Natural killer cell (primary cell): ENCODE measurements at regions of chr3 and their contacts with region 1.

Region 1: DNA sequence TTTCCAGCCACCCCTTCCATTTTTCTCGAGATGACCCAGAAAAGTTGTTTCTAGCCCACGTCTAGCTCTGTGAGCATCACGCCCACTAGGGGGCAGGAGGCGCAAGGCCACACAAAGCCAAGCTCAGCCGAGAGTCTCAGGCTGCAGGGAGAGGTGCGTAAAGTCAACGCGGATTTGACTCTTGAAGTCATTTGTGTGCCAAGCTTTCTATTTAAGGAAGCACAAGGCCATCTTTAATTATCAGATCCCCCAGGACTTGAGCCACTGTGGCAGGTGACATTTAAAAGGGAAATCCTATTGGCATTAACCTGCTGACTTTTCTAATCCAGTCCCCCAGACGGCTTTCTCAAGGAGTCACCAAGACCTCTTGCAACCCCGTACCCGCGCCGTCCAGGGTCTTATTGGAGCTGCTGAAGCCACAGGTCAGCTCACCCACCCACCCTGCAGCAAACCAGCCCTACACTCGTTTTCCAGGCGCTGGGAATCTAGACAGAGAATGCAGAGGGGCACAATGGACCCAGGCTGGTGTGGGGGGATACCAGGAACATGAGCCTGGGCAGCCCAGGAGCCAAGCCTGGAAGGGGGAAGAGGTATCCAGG is 62.1 kb downstream of the CAPN7 start:
- DNase-seq: peak; percentile 78 to 94
- ATAC-seq: peak; percentile 55 to 78 (median 59)
- H3K4me3 ChIP-seq: no peak overlapping the region
- H3K4me3 Mint-ChIP-seq: peak overlapping the region; percentile 21
- H3K27ac ChIP-seq: no peak overlapping the region
- H3K27ac Mint-ChIP-seq: peak overlapping the region; percentile 92 to 98
- H3K4me1 ChIP-seq: peaks cover 82% of the 10 kb centered on the region
- H3K4me1 Mint-ChIP-seq: peaks cover 86 to 88% of the 10 kb centered on the region in 2 donors
- H3K27me3 ChIP-seq: no peaks in the 10 kb centered on the region
- H3K27me3 Mint-ChIP-seq: no peaks in the 10 kb centered on the region
- CTCF ChIP-seq: peak; percentile 96

Region 2: DNA sequence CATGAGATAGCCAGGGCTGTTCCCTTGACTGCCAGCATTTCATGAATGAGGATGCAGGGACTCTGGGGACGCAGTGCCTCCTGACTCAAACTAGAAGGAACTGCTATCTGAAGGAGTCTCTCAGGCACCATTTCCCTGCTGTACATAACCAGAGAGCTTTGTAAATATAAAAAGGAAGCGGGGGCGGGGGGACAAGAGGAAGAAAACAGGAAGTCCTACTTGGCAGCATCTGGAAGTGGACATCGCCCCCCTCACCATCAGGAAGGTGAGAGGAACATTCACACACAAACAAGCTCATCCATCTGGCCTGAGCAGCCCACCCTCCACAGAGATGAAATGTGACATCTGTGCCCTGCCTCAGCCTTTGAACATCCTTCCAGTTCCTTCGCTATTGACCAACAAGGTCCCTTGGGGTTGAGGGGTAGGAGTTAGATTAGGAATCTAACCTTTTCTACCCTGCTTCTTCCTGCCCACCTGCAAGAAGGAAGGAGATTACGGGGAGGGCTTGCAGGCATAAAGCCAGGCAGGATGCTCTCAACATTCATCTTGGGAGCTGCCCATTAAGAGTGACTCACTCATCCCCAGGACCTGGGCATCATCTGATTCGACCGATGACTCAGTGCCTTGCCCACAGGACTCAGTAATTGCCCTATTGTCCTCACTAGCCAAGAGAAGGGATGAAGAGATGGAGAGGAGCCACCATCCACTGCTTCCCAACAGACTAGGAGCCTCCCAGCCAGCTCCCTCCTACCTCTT is 32.4 kb after region 1 on chr3:
- intact Hi-C with region 1: loop called (anchors 5 kb)
- DNase-seq: no peak
- ATAC-seq: peak in 1 of 3 donors; percentile 34
- H3K4me3 ChIP-seq: no peak overlapping the region
- H3K4me3 Mint-ChIP-seq: peak overlapping the region; percentile 98
- H3K27ac ChIP-seq: peak overlapping the region; percentile 22
- H3K27ac Mint-ChIP-seq: peak overlapping the region; percentile 87
- H3K4me1 ChIP-seq: peaks cover 86% of the 10 kb centered on the region
- H3K4me1 Mint-ChIP-seq: peaks cover 85 to 95% of the 10 kb centered on the region in 2 donors
- H3K27me3 ChIP-seq: no peaks in the 10 kb centered on the region
- H3K27me3 Mint-ChIP-seq: no peaks in the 10 kb centered on the region
- CTCF ChIP-seq: no peak

Region 3: GRCh38 chr3:15332405-15333098 is 64.4 kb after region 1 on chr3 and contains the start of gene SH3BP5:
- intact Hi-C with region 1: loop called (anchors 1 kb)
- DNase-seq: peak; percentile 75 to 87
- ATAC-seq: peak; percentile 90 to 96 (median 94)
- H3K4me3 ChIP-seq: peak within 1 kb of the TSS; percentile 97
- H3K4me3 Mint-ChIP-seq: peak within 1 kb of the TSS; percentile 97
- H3K27ac ChIP-seq: peak within 1 kb of the TSS; percentile 58
- H3K27ac Mint-ChIP-seq: peak within 1 kb of the TSS; percentile 88 to 95
- H3K4me1 ChIP-seq: peaks cover 27% of the 10 kb centered on the region
- H3K4me1 Mint-ChIP-seq: peaks cover 42 to 55% of the 10 kb centered on the region in 2 donors
- H3K27me3 ChIP-seq: no peaks in the 10 kb centered on the region
- H3K27me3 Mint-ChIP-seq: no peaks in the 10 kb centered on the region
- CTCF ChIP-seq: peak; percentile 61
- total RNA-seq, gene SH3BP5: 89.4 to 129 (median 91.0) TPM

Region 4: GRCh38 chr3:15377961-15378791 is 110.0 kb after region 1 on chr3:
- intact Hi-C with region 1: loop called (anchors 1 kb)
- DNase-seq: peak; percentile 93 to 98
- ATAC-seq: peak; percentile 96 to 98 (median 98)
- H3K4me3 ChIP-seq: no peak overlapping the region
- H3K4me3 Mint-ChIP-seq: peak overlapping the region; percentile 42
- H3K27ac ChIP-seq: peak overlapping the region; percentile 98
- H3K27ac Mint-ChIP-seq: peak overlapping the region; percentile 95
- H3K4me1 ChIP-seq: peaks cover 5% of the 10 kb centered on the region
- H3K4me1 Mint-ChIP-seq: peaks cover 8 to 9% of the 10 kb centered on the region in 2 donors
- H3K27me3 ChIP-seq: no peaks in the 10 kb centered on the region
- H3K27me3 Mint-ChIP-seq: no peaks in the 10 kb centered on the region
- CTCF ChIP-seq: peak; percentile 91

Region 5: DNA sequence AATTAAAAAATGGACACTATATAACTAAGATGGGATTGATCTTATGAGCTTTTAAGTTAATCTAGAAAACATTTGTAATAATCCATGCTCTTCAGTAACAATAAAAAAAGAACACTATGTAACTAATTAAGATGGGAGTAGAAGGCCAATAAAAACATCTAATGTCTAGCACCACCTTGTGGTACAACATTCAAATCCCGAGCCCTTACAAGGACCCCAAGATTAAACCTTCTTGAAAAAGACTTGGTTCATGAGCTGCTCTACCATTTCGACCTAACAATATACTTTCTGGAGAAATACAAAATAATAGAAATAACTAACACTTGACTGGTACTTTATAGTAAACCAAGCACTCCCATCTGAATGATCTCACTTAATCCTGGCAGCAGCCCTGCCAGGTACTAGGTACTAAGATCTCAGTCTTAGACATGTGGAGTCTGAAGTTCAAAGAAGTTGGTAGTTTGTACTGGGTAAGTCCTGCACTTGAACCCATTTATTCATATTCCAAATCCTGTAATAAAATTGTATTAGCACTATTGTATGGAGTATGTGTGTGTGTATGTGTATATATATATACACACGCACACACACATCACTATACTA is 137.4 kb after region 1 on chr3:
- intact Hi-C with region 1: loop called (anchors 1 kb)
- DNase-seq: peak in 1 of 2 donors; percentile 78
- ATAC-seq: peak; percentile 57 to 78 (median 74)
- H3K4me3 ChIP-seq: no peak overlapping the region
- H3K4me3 Mint-ChIP-seq: no peak overlapping the region
- H3K27ac ChIP-seq: no peak overlapping the region
- H3K27ac Mint-ChIP-seq: no peak overlapping the region
- H3K4me1 ChIP-seq: no peaks in the 10 kb centered on the region
- H3K4me1 Mint-ChIP-seq: no peaks in the 10 kb centered on the region
- H3K27me3 ChIP-seq: no peaks in the 10 kb centered on the region
- H3K27me3 Mint-ChIP-seq: no peaks in the 10 kb centered on the region
- CTCF ChIP-seq: peak; percentile 73

Region 6: GRCh38 chr3:15557511-15557946 is 289.4 kb after region 1 on chr3:
- intact Hi-C with region 1: loop called (anchors 5 kb)
- DNase-seq: peak; percentile 27 to 81
- ATAC-seq: peak; percentile 86 to 91 (median 88)
- H3K4me3 ChIP-seq: no peak overlapping the region
- H3K4me3 Mint-ChIP-seq: no peak overlapping the region
- H3K27ac ChIP-seq: no peak overlapping the region
- H3K27ac Mint-ChIP-seq: peak overlapping the region; percentile 85 to 91
- H3K4me1 ChIP-seq: peaks cover 14% of the 10 kb centered on the region
- H3K4me1 Mint-ChIP-seq: peaks cover 17 to 18% of the 10 kb centered on the region in 2 donors
- H3K27me3 ChIP-seq: no peaks in the 10 kb centered on the region
- H3K27me3 Mint-ChIP-seq: no peaks in the 10 kb centered on the region
- CTCF ChIP-seq: peak; percentile 82